GM10248 (cell line): ENCODE measurements at regions of chr13 and their contacts with region 1.

Region 1: DNA sequence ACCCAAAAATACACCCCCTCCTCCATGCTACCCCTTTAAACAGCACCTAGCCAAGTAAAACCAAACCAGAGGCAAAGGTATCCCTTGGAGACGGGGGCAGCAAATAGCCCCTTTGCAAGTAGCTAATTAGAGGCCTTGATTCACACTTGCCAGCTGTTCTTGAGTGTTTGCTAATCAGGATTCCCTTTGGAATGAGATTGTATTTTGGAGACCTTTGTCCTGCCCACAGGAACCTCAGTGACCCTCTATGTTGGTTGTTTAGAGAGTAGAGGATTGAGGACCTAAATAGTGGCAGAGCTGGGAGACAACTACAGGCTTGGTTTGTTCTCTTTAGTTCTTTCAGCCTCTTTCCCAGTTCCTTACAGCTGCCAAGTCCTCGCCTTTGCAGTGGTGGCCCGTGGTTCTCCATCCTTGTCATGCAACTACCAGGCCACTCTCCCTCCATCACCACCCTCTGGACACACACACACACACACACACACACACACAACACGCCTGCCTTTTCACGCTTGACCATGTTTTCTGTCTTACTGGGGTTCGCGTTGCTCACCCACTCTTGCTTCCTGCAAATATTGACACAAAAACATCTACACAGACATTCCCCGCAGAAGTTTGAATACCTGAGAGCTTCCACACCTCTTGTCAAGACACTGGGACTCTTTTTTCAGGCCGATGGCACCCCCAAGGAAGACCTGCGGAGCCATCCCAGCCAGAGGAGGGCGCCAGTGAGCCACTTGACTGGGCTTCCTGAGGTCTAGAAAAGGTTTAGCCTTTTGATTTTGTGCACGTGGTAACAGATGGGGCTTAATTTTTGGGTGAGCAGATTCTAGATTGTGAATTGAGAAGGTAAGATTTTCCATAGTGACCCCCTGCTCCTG is 80.0 kb upstream of the GPR183 start:
- DNase-seq: peak; percentile 84
- CTCF ChIP-seq: peak; percentile 93

Region 2: DNA sequence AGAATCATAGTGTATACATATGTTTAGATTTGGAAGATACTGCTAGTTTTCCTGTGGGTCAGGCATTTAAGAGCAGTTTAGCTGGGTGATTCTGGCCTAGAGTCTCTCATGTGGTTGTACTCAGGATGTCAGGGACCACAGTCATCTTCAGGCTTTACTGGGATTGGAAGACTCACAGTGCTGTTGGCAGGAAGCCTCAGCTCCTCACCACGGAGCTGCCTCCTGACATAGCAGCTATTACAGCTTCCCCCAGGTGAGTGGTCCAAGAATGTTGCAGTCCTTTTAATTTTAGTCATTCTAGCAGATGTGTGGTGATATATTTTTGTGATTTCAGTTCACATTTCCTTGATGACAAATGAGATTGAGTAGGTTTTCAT is 112.1 kb before region 1 on chr13:
- CTCF ChIA-PET with region 1: interaction called, 63 read pairs
- POLR2A ChIA-PET with region 1: no interaction called
- DNase-seq: no peak
- CTCF ChIP-seq: no peak

Region 3: DNA sequence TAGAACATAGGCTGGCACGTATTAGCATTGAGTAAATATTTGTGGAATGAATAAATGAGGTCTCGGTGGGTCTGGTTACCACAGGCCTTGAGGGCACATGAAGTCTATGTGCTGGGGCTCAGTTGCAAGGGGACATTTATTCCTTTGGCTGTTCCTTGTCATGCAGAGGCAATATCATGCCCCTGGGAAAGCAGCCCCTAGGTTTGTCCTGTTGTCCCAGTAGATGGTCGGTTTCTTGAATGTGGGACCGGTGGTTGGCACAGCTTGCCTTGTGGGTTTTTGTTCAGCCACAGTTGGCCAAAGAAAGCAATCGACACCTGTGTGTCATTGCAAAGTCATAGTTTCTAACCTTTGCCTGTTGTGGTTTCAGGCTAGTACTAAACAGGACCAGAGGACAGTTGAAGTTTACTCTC is 55.3 kb before region 1 on chr13:
- CTCF ChIA-PET with region 1: interaction called, 13 read pairs
- POLR2A ChIA-PET with region 1: no interaction called
- DNase-seq: no peak
- CTCF ChIP-seq: no peak

Region 4: DNA sequence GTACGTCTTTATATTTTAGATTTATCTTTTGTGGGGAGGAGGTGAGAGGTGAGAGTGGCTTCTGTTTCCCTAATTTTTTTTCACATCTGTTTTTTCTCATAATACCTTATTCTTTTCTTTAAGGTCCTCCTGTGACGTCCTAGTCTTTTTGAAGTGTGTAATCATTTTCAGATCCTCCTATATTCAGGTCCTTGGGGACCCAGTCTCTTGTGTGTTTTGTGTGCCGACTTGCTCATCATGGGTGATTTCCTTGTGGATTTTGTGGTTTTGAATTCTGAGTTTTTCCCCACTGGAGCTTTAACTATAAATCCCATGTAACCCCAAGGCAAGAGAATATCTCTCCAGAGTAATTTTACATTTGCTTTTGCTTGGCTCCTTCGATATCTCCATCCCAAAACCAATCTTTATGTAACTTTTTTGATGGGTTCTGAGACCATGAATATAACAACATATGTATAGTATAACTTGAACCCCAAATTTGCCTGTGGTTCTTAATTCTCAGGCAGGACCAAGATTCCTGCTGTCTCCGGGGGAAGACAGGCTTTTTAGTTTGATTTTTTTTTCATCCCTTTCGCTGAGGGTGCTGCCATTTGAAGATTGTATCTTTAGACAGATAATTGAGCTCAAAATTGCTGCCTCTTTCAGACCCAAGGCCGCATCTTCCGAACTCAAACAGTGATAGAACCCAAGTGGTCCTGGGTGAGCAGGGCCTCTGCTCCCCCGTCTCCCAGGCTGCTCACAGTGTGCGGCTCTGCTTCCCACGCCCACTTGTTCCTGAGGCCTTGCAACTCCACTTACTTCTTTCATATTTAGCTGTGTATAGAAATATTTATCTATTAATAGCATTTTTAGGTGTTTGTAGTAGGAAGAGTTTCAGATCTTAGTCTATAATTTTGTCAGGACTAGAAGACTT is 20.8 kb before region 1 on chr13:
- CTCF ChIA-PET with region 1: interaction called, 19 read pairs
- POLR2A ChIA-PET with region 1: no interaction called
- DNase-seq: no peak
- CTCF ChIP-seq: no peak

Region 5: GRCh38 chr13:99406799-99407201 is 19.6 kb after region 1 on chr13:
- CTCF ChIA-PET with region 1: interaction called, 86 read pairs
- POLR2A ChIA-PET with region 1: no interaction called
- DNase-seq: no peak
- CTCF ChIP-seq: no peak

Region 6: DNA sequence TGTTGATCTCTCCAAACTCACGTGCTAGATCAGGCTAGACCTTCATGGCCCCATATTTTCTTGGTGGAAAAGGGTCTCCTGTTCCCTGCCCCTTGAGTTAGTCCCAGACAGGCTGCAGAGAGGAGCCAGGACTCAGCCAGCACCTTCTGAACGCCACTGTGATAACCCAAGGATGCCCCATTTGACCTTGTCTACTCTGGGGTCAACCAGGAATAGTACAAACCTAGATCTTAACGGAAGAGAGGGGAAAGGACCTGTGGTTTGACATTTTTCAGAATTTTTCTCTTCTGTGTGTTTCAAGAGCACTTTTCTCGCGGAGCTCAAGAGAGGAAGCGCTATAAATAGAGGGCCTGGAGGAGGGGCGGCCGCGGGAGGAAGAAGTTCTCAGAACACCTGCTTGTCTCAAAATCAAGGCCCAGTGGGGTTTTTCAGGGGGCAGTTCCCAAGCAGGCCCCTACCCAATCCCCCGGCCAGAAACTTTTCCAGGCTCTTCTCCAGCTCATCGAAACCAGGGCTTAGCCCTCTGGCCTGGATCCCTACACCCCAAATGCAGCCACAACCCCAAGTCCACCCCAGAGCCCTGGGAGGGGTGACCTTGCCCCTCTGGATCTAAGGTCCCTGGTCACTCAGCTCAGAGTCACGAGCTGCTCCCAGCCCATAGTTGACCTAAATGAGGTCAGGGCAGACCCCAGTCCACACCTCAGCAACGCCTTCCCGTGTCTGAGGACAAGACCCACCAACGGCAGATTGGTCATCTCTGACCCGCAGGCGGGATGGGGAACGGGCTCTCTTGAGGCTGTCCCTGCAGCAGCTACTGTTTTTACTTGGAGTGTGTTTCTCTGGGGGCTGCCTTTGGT is 38.6 kb after region 1 on chr13:
- CTCF ChIA-PET with region 1: interaction called, 50 read pairs
- POLR2A ChIA-PET with region 1: interaction called, 3 read pairs
- DNase-seq: peak; percentile 71
- CTCF ChIP-seq: no peak

Region 7: DNA sequence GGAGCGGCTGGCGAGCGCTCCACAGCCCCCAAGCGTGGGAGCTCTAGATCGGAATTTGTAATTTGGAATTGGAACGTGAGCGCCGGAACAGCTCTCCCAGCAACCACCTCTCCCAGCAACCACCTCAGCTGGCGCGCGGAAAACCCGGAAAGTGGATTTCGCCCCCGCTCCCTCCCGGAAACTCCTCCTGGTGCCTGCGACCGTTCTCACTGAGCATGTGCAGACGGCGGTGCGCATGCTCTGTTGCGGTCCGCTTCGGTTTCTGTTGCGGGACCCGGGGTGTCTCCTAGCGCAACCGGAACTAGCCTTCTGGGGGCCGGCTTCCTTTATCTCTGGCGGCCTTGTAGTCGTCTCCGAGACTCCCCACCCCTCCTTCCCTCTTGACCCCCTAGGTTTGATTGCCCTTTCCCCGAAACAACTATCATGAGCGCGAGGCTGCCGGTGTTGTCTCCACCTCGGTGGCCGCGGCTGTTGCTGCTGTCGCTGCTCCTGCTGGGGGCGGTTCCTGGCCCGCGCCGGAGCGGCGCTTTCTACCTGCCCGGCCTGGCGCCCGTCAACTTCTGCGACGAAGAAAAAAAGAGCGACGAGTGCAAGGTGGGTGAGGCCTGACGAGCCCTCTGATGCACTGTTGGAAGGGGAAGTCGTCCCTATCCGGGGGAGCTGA is 114.2 kb after region 1 on chr13 and contains the start of gene TM9SF2:
- CTCF ChIA-PET with region 1: interaction called, 13 read pairs
- POLR2A ChIA-PET with region 1: no interaction called
- DNase-seq: peak; percentile 92
- CTCF ChIP-seq: no peak